GM12878 (cell line): ENCODE measurements at regions of chr20 and their contacts with region 1.

Region 1: GRCh38 chr20:35994994-35995453 is 26.6 kb downstream of the CNBD2 start:
- DNase-seq: peak; percentile 16
- ATAC-seq: peak; percentile 97
- H3K4me3 ChIP-seq: no peak overlapping the region
- H3K27ac ChIP-seq: no peak overlapping the region
- H3K4me1 ChIP-seq: no peaks in the 10 kb centered on the region
- H3K27me3 ChIP-seq: no peaks in the 10 kb centered on the region
- CTCF ChIP-seq: peak; percentile 91 to 95 (median 94)
- EP300 ChIP-seq: no peak
- POLR2A ChIP-seq: no peak
- RAD21 ChIP-seq: peak; percentile 89

Region 2: GRCh38 chr20:35726759-35727711 is 268.0 kb before region 1 on chr20:
- CTCF ChIA-PET with region 1: no interaction called
- POLR2A ChIA-PET with region 1: no interaction called
- RAD21 ChIA-PET with region 1: no interaction called
- SMC1A ChIA-PET with region 1: no interaction called
- in situ Hi-C with region 1: no loop called
- intact Hi-C with region 1: no loop called
- DNase-seq: no peak
- ATAC-seq: no peak
- H3K4me3 ChIP-seq: no peak overlapping the region
- H3K27ac ChIP-seq: no peak overlapping the region
- H3K4me1 ChIP-seq: no peaks in the 10 kb centered on the region; the same call in 1 of the 2 replicates
- H3K27me3 ChIP-seq: no peaks in the 10 kb centered on the region
- CTCF ChIP-seq: no peak
- EP300 ChIP-seq: no peak
- POLR2A ChIP-seq: peak; percentile 43; the same call in 1 of the 2 replicates
- RAD21 ChIP-seq: no peak

Region 3: DNA sequence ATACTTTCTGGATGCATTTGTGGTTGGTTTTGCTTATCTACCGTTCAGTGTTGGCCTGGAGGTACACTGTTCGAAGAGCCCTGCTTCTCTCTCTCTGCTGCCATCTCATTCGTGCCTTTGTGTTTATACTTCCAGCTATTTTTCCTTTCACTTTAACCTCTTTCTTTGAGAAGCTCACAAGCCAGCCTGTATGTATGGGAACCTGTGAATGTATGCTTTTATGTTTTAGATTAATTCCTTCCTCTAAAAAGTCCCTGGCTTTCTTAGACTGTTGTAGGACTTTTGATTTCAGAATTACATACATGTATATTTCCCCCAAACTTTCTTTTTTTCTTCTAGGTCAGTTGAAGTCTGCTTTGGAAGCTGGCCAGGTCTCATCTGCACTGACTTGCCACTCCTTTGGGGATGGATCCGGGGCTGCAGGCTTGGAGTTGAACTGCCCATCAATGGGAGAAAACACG is 123.7 kb before region 1 on chr20:
- CTCF ChIA-PET with region 1: no interaction called
- POLR2A ChIA-PET with region 1: no interaction called
- RAD21 ChIA-PET with region 1: no interaction called
- SMC1A ChIA-PET with region 1: no interaction called
- in situ Hi-C with region 1: no loop called
- intact Hi-C with region 1: no loop called
- DNase-seq: no peak
- ATAC-seq: no peak
- H3K4me3 ChIP-seq: no peak overlapping the region
- H3K27ac ChIP-seq: no peak overlapping the region
- H3K4me1 ChIP-seq: no peaks in the 10 kb centered on the region
- H3K27me3 ChIP-seq: no peaks in the 10 kb centered on the region
- CTCF ChIP-seq: no peak
- EP300 ChIP-seq: no peak
- POLR2A ChIP-seq: no peak
- RAD21 ChIP-seq: no peak

Region 4: GRCh38 chr20:35954200-35954906 is 40.7 kb before region 1 on chr20 and contains the start of gene SCAND1:
- CTCF ChIA-PET with region 1: interaction called, 27 read pairs
- POLR2A ChIA-PET with region 1: no interaction called
- RAD21 ChIA-PET with region 1: interaction called, 3 read pairs
- SMC1A ChIA-PET with region 1: interaction called, 7 read pairs
- in situ Hi-C with region 1: no loop called
- intact Hi-C with region 1: no loop called
- DNase-seq: peak; percentile 93
- ATAC-seq: peak; percentile 92
- H3K4me3 ChIP-seq: peak within 1 kb of the TSS; percentile 91
- H3K27ac ChIP-seq: peak within 1 kb of the TSS; percentile 96
- H3K4me1 ChIP-seq: peaks cover 3% of the 10 kb centered on the region
- H3K27me3 ChIP-seq: no peaks in the 10 kb centered on the region
- CTCF ChIP-seq: peak; percentile 93 to 99 (median 99)
- EP300 ChIP-seq: peak in 1 of 2 experiments; percentile 52; a peak in 1 of 4 replicates
- POLR2A ChIP-seq: peak; percentile 95
- RAD21 ChIP-seq: peak; percentile 20; the same call in 1 of the 2 replicates
- polyA plus RNA-seq, gene SCAND1: 0.08 to 0.16 TPM

Region 5: DNA sequence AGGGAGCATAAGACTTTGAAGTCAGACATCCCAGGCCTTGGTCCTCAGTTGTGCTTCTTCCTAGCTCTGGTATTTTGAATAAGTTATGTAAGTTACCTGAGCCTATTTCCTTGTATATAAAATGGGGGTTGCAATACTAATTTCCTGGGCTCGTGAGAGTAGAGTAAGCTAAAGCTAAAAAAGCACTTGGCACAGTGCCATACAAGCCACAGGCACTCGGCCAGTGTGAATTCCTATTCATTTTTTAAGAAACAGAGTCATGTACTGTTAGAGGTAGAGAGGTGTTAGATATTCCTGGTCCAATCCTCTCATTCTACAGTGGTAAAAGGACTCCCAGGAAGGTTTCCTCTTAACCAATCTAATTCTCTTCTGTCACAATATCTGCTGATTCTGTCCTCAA is 80.0 kb after region 1 on chr20:
- CTCF ChIA-PET with region 1: interaction called, 14 read pairs
- POLR2A ChIA-PET with region 1: no interaction called
- RAD21 ChIA-PET with region 1: interaction called, 4 read pairs
- SMC1A ChIA-PET with region 1: interaction called, 3 read pairs
- in situ Hi-C with region 1: no loop called
- intact Hi-C with region 1: no loop called
- DNase-seq: no peak
- ATAC-seq: no peak
- H3K4me3 ChIP-seq: no peak overlapping the region
- H3K27ac ChIP-seq: no peak overlapping the region
- H3K4me1 ChIP-seq: no peaks in the 10 kb centered on the region
- H3K27me3 ChIP-seq: no peaks in the 10 kb centered on the region
- CTCF ChIP-seq: no peak
- EP300 ChIP-seq: no peak
- POLR2A ChIP-seq: no peak
- RAD21 ChIP-seq: no peak

Region 6: DNA sequence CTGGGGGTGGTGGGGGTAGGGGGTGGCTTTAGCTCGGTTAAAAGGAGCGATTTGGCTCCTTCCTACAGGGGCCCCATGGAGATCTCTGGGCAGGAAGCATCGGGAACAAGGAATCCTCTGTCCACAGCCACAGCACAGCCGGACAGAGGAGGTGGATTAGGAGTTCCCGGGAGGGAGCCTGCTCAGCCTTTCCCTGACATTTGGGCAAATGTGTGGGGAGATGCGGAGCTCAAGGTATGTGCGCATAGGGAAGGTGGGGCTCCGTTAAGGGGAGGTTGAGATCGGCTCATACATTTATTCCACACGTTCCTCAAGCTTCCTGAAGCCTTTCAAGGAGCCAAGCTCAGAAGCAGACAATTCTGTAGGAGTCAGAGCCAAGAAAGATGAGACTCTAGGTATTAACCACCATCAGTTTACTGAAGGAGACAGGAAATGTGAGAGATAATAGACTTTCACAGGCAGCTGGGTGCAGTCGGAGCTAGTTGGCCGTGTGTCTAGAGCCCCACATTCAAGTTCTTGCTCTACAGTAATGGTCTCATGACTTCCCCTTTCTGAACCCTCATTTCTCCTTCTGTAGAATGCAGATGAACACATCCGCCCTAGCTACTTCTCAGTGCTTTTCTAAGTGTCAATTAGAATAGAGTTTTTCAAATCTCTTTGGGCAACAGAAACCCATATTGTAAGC is 118.7 kb after region 1 on chr20:
- CTCF ChIA-PET with region 1: interaction called, 10 read pairs
- POLR2A ChIA-PET with region 1: no interaction called
- RAD21 ChIA-PET with region 1: interaction called, 7 read pairs
- SMC1A ChIA-PET with region 1: interaction called, 4 read pairs
- in situ Hi-C with region 1: no loop called
- intact Hi-C with region 1: no loop called
- DNase-seq: peak; percentile 28
- ATAC-seq: peak; percentile 83
- H3K4me3 ChIP-seq: no peak overlapping the region
- H3K27ac ChIP-seq: no peak overlapping the region
- H3K4me1 ChIP-seq: peaks cover 8% of the 10 kb centered on the region; the same call in 1 of the 2 replicates
- H3K27me3 ChIP-seq: no peaks in the 10 kb centered on the region; a peak in 1 of 4 replicates
- CTCF ChIP-seq: no peak
- EP300 ChIP-seq: no peak
- POLR2A ChIP-seq: no peak
- RAD21 ChIP-seq: no peak

Region 7: DNA sequence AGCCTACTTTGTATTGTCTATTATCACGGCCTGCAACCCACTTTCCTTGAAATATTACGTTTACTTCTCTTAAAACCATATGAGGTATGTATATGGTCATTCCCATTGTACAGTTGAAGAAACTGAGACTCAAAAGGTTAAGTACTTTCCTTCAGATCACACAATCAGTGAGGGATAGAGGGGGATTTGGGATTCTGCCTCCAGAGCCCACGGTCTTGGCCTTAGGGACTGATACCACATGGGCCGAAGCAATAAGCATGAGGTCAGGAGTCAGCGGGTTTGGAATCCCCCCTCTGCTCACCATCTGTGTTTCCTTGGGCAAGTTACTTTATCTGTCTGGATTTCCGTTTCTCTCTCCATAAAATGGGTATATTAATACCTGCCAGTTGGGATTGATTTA is 140.1 kb after region 1 on chr20:
- CTCF ChIA-PET with region 1: interaction called, 717 read pairs
- POLR2A ChIA-PET with region 1: interaction called, 7 read pairs
- RAD21 ChIA-PET with region 1: interaction called, 325 read pairs
- SMC1A ChIA-PET with region 1: interaction called, 344 read pairs
- in situ Hi-C with region 1: loop called (anchors 5 kb)
- intact Hi-C with region 1: loop called (anchors 1 kb)
- DNase-seq: no peak
- ATAC-seq: no peak
- H3K4me3 ChIP-seq: no peak overlapping the region
- H3K27ac ChIP-seq: no peak overlapping the region
- H3K4me1 ChIP-seq: no peaks in the 10 kb centered on the region
- H3K27me3 ChIP-seq: no peaks in the 10 kb centered on the region
- CTCF ChIP-seq: no peak
- EP300 ChIP-seq: no peak
- POLR2A ChIP-seq: no peak
- RAD21 ChIP-seq: no peak

Region 8: GRCh38 chr20:36154700-36155628 is 159.9 kb after region 1 on chr20 and contains the start of gene EPB41L1:
- CTCF ChIA-PET with region 1: interaction called, 717 read pairs
- POLR2A ChIA-PET with region 1: no interaction called
- RAD21 ChIA-PET with region 1: interaction called, 5 read pairs
- SMC1A ChIA-PET with region 1: interaction called, 5 read pairs
- in situ Hi-C with region 1: no loop called
- intact Hi-C with region 1: no loop called
- DNase-seq: no peak
- ATAC-seq: no peak
- H3K4me3 ChIP-seq: no peak within 1 kb of the TSS
- H3K27ac ChIP-seq: no peak within 1 kb of the TSS
- H3K4me1 ChIP-seq: no peaks in the 10 kb centered on the region
- H3K27me3 ChIP-seq: peaks cover 7 to 10% of the 10 kb centered on the region in 2 experiments; a peak in 3 of 4 replicates
- CTCF ChIP-seq: no peak
- EP300 ChIP-seq: no peak
- POLR2A ChIP-seq: no peak
- RAD21 ChIP-seq: no peak
- polyA plus RNA-seq, gene EPB41L1: 0.08 to 0.16 TPM

Region 9: DNA sequence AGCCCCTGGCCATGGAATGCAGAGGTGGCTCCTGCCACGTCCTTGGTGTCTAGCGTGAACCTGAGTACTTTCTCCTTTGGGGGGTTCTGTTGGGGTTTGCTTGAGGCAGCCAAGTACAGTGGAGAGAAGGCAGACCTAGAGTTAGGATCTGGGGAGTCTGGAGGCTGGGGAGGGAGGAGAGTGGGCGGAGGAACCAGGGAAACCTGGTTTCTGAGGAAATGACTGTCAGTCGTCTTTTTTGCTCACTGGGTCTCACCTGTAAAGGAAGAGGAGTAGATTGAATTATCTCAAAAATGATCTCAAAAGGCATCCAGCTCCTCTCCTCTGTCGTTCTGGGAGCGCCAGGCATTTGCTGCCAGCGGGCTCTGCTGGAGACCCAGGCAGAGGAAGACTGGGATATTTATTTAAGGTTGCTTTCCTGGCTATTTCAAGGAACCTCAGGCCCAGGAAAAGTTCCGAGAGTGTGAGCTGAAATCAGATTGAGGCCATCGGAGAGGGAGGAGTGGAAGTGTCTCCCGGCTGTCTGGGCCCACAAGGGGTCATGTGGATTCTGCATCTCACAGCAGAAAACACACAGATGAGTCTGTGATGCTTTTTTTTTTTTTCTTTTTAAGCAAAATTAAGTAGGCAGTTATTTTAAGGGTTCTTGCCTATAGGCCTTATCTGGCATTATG is 175.7 kb after region 1 on chr20:
- CTCF ChIA-PET with region 1: no interaction called
- POLR2A ChIA-PET with region 1: no interaction called
- RAD21 ChIA-PET with region 1: no interaction called
- SMC1A ChIA-PET with region 1: no interaction called
- in situ Hi-C with region 1: no loop called
- intact Hi-C with region 1: no loop called
- DNase-seq: no peak
- ATAC-seq: no peak
- H3K4me3 ChIP-seq: no peak overlapping the region
- H3K27ac ChIP-seq: no peak overlapping the region
- H3K4me1 ChIP-seq: no peaks in the 10 kb centered on the region
- H3K27me3 ChIP-seq: no peaks in the 10 kb centered on the region; a peak in 1 of 4 replicates
- CTCF ChIP-seq: no peak
- EP300 ChIP-seq: no peak
- POLR2A ChIP-seq: no peak
- RAD21 ChIP-seq: no peak

Region 10: GRCh38 chr20:36439040-36439730 is 444.2 kb after region 1 on chr20:
- CTCF ChIA-PET with region 1: interaction called, 11 read pairs
- POLR2A ChIA-PET with region 1: no interaction called
- RAD21 ChIA-PET with region 1: interaction called, 4 read pairs
- SMC1A ChIA-PET with region 1: interaction called, 3 read pairs
- in situ Hi-C with region 1: loop called (anchors 25 kb)
- intact Hi-C with region 1: loop called (anchors 2 kb)
- DNase-seq: no peak
- ATAC-seq: peak; percentile 88
- H3K4me3 ChIP-seq: no peak overlapping the region
- H3K27ac ChIP-seq: no peak overlapping the region
- H3K4me1 ChIP-seq: no peaks in the 10 kb centered on the region
- H3K27me3 ChIP-seq: no peaks in the 10 kb centered on the region
- CTCF ChIP-seq: peak; percentile 89 to 95 (median 89)
- EP300 ChIP-seq: no peak
- POLR2A ChIP-seq: no peak
- RAD21 ChIP-seq: peak; percentile 89

Region 11: GRCh38 chr20:36573103-36573794 is 578.2 kb after region 1 on chr20 and contains the start of gene TGIF2:
- CTCF ChIA-PET with region 1: no interaction called
- POLR2A ChIA-PET with region 1: no interaction called
- RAD21 ChIA-PET with region 1: no interaction called
- SMC1A ChIA-PET with region 1: no interaction called
- in situ Hi-C with region 1: no loop called
- intact Hi-C with region 1: no loop called
- DNase-seq: peak; percentile 48
- ATAC-seq: peak; percentile 81
- H3K4me3 ChIP-seq: peak within 1 kb of the TSS; percentile 94
- H3K27ac ChIP-seq: peak within 1 kb of the TSS; percentile 96
- H3K4me1 ChIP-seq: peaks cover 5% of the 10 kb centered on the region
- H3K27me3 ChIP-seq: no peaks in the 10 kb centered on the region
- CTCF ChIP-seq: no peak
- EP300 ChIP-seq: 0 out of 4 replicates have a peak, but pooled peaks of 1 of the 2 experiments have one; percentile 27
- POLR2A ChIP-seq: peak; percentile 85
- RAD21 ChIP-seq: no peak
- polyA plus RNA-seq, gene TGIF2: 13.1 to 26.4 TPM